IMR-90 (cell line): ENCODE measurements at regions of chr1 and their contacts with region 1.

Region 1: GRCh38 chr1:160354388-160354985 is 11.3 kb downstream of the NCSTN start:
- DNase-seq: peak; percentile 18
- ATAC-seq: peak; percentile 44; the same call in 1 of the 2 replicates
- H3K4me3 ChIP-seq: no peak overlapping the region
- H3K27ac ChIP-seq: no peak overlapping the region
- H3K4me1 ChIP-seq: no peaks in the 10 kb centered on the region
- H3K27me3 ChIP-seq: no peaks in the 10 kb centered on the region
- CTCF ChIP-seq: peak; percentile 45; the same call in 1 of the 2 replicates
- POLR2A ChIP-seq: no peak
- RAD21 ChIP-seq: peak; percentile 29

Region 2: GRCh38 chr1:160098852-160099561 is 255.5 kb before region 1 on chr1:
- CTCF ChIA-PET with region 1: no interaction called
- POLR2A ChIA-PET with region 1: no interaction called
- dilution Hi-C with region 1: no loop called
- in situ Hi-C with region 1: loop called (anchors 10 kb)
- intact Hi-C with region 1: no loop called
- DNase-seq: peak; percentile 87
- ATAC-seq: peak; percentile 95
- H3K4me3 ChIP-seq: peak overlapping the region; percentile 64
- H3K27ac ChIP-seq: 0 out of 2 replicates have a peak overlapping the region, but pooled peaks have one; percentile 7
- H3K4me1 ChIP-seq: peaks cover 16% of the 10 kb centered on the region
- H3K27me3 ChIP-seq: no peaks in the 10 kb centered on the region; the same call in 1 of the 2 replicates
- CTCF ChIP-seq: no peak
- POLR2A ChIP-seq: no peak
- RAD21 ChIP-seq: no peak

Region 3: GRCh38 chr1:160144921-160145320 is 209.6 kb before region 1 on chr1:
- CTCF ChIA-PET with region 1: no interaction called
- POLR2A ChIA-PET with region 1: no interaction called
- dilution Hi-C with region 1: no loop called
- in situ Hi-C with region 1: no loop called
- intact Hi-C with region 1: no loop called
- DNase-seq: peak; percentile 10
- ATAC-seq: no peak
- H3K4me3 ChIP-seq: no peak overlapping the region
- H3K27ac ChIP-seq: no peak overlapping the region
- H3K4me1 ChIP-seq: no peaks in the 10 kb centered on the region
- H3K27me3 ChIP-seq: peaks cover 25% of the 10 kb centered on the region
- CTCF ChIP-seq: no peak
- POLR2A ChIP-seq: no peak
- RAD21 ChIP-seq: no peak